ENCODE measurements at regions of chr14 and their contacts with region 1.

Region 1: GRCh38 chr14:61837336-61838229 is 75.4 kb downstream of the SNAPC1 start:
- DNase-seq: peak; percentile 65 to 80 (median 76)
- ATAC-seq: peak; percentile 78 to 95 (median 94)
- H3K4me3 ChIP-seq: no peak overlapping the region
- H3K27ac ChIP-seq: no peak overlapping the region
- H3K4me1 ChIP-seq: peaks cover 0 to 7% (median 0%) of the 10 kb centered on the region in 12 donors
- H3K27me3 ChIP-seq: peaks cover 0 to 4% (median 0%) of the 10 kb centered on the region in 9 donors
- CTCF ChIP-seq: peak; percentile 90 to 99 (median 95)
- POLR2A ChIP-seq: no peak

Region 2: GRCh38 chr14:61269321-61270083 is 568.1 kb before region 1 on chr14:
- intact Hi-C with region 1: loop called in 3 of 10 experiments (anchors 5 to 10 kb)
- DNase-seq: peak; percentile 45 to 77 (median 61)
- ATAC-seq: peak; percentile 48 to 88 (median 73)
- H3K4me3 ChIP-seq: peak overlapping the region in 10 of 12 donors; percentile 16 to 46 (median 34)
- H3K27ac ChIP-seq: no peak overlapping the region
- H3K4me1 ChIP-seq: peaks cover 0 to 8% (median 0%) of the 10 kb centered on the region in 12 donors
- H3K27me3 ChIP-seq: peaks cover 0 to 37% (median 5%) of the 10 kb centered on the region in 9 donors
- CTCF ChIP-seq: peak; percentile 63 to 81 (median 76)
- POLR2A ChIP-seq: no peak

Region 3: DNA sequence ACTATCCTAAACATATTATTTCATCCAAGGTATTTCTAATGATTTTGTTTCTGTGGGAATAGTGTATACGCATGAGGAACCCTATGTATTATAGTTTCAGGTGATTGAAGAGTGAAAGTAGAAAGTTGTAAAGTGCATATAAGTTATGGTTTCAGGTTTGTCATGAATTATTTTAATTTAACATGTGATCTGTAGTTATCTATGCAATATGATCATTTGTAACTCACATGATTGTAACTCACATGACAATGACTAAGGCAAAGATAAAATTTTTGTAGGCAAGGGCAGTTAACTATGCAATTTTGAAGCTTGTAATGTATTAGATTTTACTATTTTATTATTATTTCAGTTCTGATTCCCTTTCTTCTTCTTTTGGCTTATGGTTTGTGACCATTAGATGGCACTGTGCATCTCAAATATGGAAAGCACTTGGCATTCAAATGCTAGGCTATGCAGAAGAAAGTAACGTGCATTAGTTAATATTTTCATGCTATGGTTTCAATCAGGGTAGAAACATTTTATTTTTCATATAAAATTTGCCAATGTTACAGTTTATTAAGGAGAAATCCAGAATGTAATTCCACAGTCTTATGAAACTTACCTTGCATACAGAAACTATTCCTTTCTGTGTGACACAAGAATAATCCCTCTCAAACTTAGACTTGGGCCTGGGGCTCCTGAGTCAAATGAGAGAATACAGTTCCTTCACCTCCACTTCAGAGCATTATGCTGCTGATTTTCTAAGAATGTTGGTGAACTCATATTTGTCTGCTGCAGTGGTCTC is 540.7 kb before region 1 on chr14:
- intact Hi-C with region 1: loop called (anchors 2 to 10 kb)
- DNase-seq: no peak
- ATAC-seq: peak in 1 of 4 donors; percentile 57
- H3K4me3 ChIP-seq: no peak overlapping the region
- H3K27ac ChIP-seq: no peak overlapping the region
- H3K4me1 ChIP-seq: peaks cover 0 to 19% (median 0%) of the 10 kb centered on the region in 12 donors
- H3K27me3 ChIP-seq: no peaks in the 10 kb centered on the region
- CTCF ChIP-seq: peak; percentile 51 to 77 (median 68)
- POLR2A ChIP-seq: no peak

Region 4: DNA sequence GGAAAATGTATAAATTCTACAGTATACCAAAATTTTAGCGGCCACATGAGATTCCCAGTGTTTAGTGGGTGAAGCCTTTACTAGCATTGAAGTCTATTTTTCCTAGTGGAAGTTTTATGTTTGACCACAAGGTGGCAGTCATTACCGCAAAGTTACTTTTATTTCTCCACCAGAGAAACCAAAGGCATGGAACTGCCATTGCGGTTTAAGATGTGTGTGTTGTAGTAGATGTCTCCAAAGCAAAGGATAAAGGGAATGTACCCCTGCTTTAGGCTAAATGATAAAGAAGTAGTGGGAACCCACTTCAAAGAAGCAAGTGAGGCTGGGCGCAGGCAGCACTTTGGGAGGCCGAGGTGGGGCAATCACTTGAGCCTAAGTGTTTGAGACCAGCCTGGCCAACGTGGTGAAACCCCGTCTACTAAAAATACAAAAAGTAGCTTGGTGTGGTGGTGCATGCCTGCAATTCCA is 375.7 kb before region 1 on chr14:
- intact Hi-C with region 1: loop called in 8 of 10 experiments (anchors 1 to 5 kb)
- DNase-seq: no peak
- ATAC-seq: peak; percentile 27 to 49 (median 38)
- H3K4me3 ChIP-seq: no peak overlapping the region
- H3K27ac ChIP-seq: peak overlapping the region in 4 of 12 donors; percentile 32 to 65 (median 40)
- H3K4me1 ChIP-seq: peaks cover 0 to 36% (median 27%) of the 10 kb centered on the region in 12 donors
- H3K27me3 ChIP-seq: no peaks in the 10 kb centered on the region
- CTCF ChIP-seq: peak; percentile 65 to 90 (median 81)
- POLR2A ChIP-seq: no peak

Region 5: DNA sequence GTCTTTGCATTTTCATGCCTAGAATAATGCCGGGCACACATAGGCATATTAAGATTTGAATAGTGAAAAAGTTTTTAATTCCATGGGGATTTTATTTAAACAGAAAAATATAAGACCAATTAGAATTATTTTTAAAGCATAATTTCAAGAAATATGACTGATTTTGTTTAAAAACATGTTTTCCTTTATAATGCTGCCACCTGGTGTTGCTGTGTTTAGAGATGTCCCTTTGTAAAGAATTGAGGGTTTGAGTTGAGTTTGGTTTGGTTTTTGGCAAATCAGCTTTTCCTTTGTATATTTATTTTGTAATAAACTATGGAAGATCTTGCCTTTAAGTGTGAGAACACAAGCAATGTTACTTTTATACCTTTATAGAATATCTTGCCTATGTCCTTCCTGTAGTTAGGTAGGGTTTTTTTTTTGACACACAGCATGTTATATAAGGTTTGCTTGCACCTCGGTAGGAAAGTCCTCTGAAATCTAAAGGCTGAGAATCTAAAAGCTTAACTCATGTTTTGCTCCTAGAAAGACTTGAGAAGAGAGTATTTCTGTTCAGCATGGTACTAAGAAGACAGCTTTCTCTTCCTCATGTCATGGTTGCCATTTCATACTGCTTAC is 106.7 kb before region 1 on chr14:
- intact Hi-C with region 1: loop called in 1 of 10 experiments (anchors 10 kb)
- DNase-seq: no peak
- ATAC-seq: no peak
- H3K4me3 ChIP-seq: no peak overlapping the region
- H3K27ac ChIP-seq: peak overlapping the region in 3 of 12 donors; percentile 18 to 44 (median 25)
- H3K4me1 ChIP-seq: peaks cover 0 to 26% (median 8%) of the 10 kb centered on the region in 12 donors
- H3K27me3 ChIP-seq: no peaks in the 10 kb centered on the region
- CTCF ChIP-seq: peak in 11 of 12 donors; percentile 26 to 71 (median 55)
- POLR2A ChIP-seq: no peak

Region 6: DNA sequence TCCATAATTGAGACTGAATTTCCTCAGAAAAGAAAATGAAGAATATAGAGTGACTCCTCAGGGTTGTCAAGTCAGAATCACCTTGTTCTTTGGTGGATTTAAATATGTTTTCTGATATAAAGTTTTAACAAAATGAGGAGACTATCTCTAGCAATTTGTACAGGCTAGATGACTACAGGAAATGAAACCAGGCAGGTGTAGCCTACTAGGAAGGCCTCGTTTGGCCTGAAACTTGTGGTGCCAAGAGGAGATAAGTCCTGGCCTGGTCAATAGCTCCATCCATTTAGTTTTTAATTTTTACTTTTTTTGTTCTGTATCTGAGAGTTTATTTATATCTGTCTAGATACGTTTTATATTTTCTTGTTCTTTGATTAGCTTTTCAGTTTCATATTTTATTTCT is 33.8 kb before region 1 on chr14:
- intact Hi-C with region 1: no loop called
- DNase-seq: no peak
- ATAC-seq: no peak
- H3K4me3 ChIP-seq: no peak overlapping the region
- H3K27ac ChIP-seq: no peak overlapping the region
- H3K4me1 ChIP-seq: no peaks in the 10 kb centered on the region
- H3K27me3 ChIP-seq: peaks cover 0 to 3% (median 0%) of the 10 kb centered on the region in 9 donors
- CTCF ChIP-seq: no peak
- POLR2A ChIP-seq: no peak

Region 7: GRCh38 chr14:61934385-61934784 is 96.8 kb after region 1 on chr14:
- intact Hi-C with region 1: no loop called
- DNase-seq: no peak
- ATAC-seq: no peak
- H3K4me3 ChIP-seq: no peak overlapping the region
- H3K27ac ChIP-seq: no peak overlapping the region
- H3K4me1 ChIP-seq: no peaks in the 10 kb centered on the region
- H3K27me3 ChIP-seq: peaks cover 0 to 6% (median 0%) of the 10 kb centered on the region in 9 donors
- CTCF ChIP-seq: no peak
- POLR2A ChIP-seq: no peak